ENCODE measurements at regions of chr16 and their contacts with region 1.

Region 1: GRCh38 chr16:49663081-49664065 is 192.5 kb downstream of the ZNF423 start:
- DNase-seq: peak in 4 of 5 donors; percentile 40 to 76 (median 50)
- H3K4me3 ChIP-seq: peak overlapping the region; percentile 32
- H3K27ac ChIP-seq: peak overlapping the region; percentile 88 to 91
- H3K4me1 ChIP-seq: peaks cover 11% of the 10 kb centered on the region
- H3K27me3 ChIP-seq: no peaks in the 10 kb centered on the region
- CTCF ChIP-seq: no peak
- EP300 ChIP-seq: no peak
- POLR2A ChIP-seq: no peak

Region 2: DNA sequence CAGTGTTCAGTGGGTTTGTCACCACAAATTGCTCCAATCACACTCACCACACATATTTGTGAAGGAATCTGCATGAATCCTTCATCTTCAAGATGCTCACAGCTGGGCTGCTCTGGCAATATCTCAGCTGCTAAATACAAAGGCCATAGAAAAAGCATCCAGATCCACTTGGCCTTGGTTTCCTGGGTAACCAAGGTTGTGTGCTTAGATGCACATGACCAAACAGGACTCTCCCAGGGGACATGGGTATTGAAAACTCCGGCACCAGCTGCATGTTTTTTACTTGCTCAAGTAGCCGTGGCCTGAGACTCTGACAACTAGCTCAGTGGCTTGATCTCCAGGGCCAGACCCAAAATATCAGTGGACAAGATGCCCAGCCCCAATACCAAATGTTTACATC is 513.0 kb before region 1 on chr16:
- intact Hi-C with region 1: no loop called
- DNase-seq: no peak
- H3K4me3 ChIP-seq: no peak overlapping the region
- H3K27ac ChIP-seq: no peak overlapping the region
- H3K4me1 ChIP-seq: no peaks in the 10 kb centered on the region
- H3K27me3 ChIP-seq: no peaks in the 10 kb centered on the region
- CTCF ChIP-seq: no peak
- EP300 ChIP-seq: no peak
- POLR2A ChIP-seq: no peak

Region 3: DNA sequence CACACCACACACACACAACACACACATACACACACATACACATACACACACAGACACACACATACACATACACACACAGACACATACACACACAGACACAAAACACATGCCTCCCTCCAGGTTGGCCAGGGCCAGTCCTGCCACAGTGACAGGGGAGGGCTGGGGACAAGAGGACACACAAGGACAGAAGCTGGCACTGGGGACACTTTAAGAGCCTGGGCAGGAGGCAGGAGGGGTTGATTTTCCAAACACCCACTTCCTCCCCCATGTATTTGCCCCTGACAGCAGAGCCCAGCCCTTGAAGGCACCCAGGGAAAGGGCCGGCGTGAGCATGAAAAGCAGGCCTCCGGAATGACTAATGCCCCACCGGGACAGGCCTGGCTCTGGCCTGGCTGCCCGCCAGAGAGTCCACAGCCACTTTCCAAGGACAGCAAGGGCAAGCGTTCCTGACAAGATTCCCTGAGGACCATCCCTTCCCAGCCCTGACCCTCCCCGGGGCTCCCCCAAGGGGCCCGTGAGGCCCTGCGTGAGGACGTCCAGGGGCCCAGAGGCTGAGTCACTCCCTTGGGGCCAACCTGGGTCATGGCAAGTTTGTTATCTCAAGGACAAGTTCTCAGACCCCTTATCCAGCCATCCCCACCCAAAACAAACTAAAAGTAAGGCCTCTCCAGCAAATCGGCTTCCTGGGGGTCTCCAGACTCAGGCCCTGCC is 43.1 kb before region 1 on chr16:
- intact Hi-C with region 1: no loop called
- DNase-seq: peak; percentile 82 to 92 (median 90)
- H3K4me3 ChIP-seq: no peak overlapping the region
- H3K27ac ChIP-seq: peak overlapping the region; percentile 17 to 83
- H3K4me1 ChIP-seq: peaks cover 19% of the 10 kb centered on the region
- H3K27me3 ChIP-seq: no peaks in the 10 kb centered on the region
- CTCF ChIP-seq: no peak
- EP300 ChIP-seq: no peak
- POLR2A ChIP-seq: no peak

Region 4: DNA sequence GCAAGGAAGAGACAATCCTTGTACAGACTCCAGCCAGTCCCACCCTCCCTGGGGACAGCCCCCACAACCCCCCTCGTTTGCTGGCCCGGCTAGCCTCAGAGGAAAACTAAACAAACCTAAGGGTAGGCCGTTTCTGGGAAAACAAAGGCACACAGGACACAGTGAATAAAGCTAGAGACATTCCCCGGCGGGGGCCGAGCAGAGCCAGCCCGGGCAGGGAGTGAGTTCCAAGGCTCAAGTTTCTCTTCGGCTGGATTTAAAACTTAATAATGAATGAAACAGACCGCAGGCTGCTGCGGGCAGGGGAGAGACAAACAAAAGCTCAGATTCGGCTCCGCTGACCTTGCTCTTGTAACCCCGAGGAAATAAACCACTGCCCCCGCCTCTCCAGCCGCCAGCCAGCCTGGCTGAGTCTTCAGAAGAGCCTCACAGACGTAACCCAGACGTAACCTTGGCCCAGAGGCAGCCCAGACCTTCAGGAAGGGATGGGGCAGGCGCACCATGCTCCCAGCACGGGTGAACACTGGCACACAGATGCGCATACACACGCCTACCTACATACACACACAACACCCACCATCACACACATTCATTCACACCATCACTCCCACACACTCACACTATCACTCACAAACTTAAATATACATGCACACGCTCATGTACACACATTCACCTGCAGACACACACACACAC is 23.5 kb before region 1 on chr16:
- intact Hi-C with region 1: loop called in 1 of 4 experiments (anchors 1 kb)
- DNase-seq: peak; percentile 82 to 92 (median 88)
- H3K4me3 ChIP-seq: peak overlapping the region; percentile 13
- H3K27ac ChIP-seq: peak overlapping the region in 1 of 2 donors; percentile 69
- H3K4me1 ChIP-seq: peaks cover 34% of the 10 kb centered on the region
- H3K27me3 ChIP-seq: no peaks in the 10 kb centered on the region
- CTCF ChIP-seq: no peak
- EP300 ChIP-seq: no peak
- POLR2A ChIP-seq: no peak

Measured in ovary (tissue), 10 donors.